Ascending aorta (tissue), 2 donors: ENCODE measurements at regions of chr17 and their contacts with region 1.

Region 1: DNA sequence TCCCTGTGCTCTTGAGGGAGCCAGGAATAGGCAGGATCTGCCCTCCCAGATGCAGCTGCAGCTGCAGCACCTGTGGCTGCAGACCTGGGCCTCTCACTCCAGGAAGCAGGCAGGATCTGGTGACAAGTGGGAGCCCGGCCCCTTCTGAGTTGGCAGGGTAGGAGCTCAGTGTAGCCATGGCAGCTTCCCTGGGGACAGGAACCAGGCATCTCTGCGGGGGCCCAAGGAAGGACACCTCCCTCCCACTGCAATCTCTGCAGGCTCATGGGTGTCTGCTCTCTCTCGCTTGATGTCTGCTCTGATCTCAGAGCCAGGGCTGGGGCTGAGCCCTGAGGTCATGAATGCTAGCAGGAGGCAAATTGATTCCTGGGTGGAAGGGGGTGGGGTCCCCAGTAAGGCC is 592.5 kb upstream of the CA10 start:
- DNase-seq: no peak
- H3K4me3 ChIP-seq: no peak overlapping the region
- H3K27ac ChIP-seq: no peak overlapping the region
- H3K4me1 ChIP-seq: no peaks in the 10 kb centered on the region
- H3K27me3 ChIP-seq: no peaks in the 10 kb centered on the region
- CTCF ChIP-seq: no peak

Region 2: DNA sequence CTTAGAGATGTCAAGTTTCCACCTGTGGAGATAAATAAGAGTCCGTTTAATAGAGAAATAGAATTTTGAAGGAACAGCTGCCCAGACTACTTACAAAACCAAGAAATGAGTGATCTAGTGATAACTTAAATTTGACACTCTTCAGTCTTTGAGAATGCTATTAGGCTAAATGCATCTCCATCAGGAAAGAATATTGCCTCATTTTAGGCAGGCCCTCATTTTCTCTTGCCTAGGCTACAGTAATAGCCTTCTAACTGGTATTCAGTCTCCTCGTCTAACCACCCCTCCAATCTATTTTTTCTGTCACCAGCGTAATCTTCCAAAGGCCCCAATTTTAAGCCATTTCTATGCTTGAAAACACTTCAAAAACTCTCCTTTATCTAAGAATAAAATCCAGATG is 54.7 kb before region 1 on chr17:
- intact Hi-C with region 1: loop called (anchors 10 kb)
- DNase-seq: no peak
- H3K4me3 ChIP-seq: no peak overlapping the region
- H3K27ac ChIP-seq: no peak overlapping the region
- H3K4me1 ChIP-seq: no peaks in the 10 kb centered on the region
- H3K27me3 ChIP-seq: no peaks in the 10 kb centered on the region
- CTCF ChIP-seq: no peak